ENCODE measurements at regions of chr16 and their contacts with region 1.

Region 1: DNA sequence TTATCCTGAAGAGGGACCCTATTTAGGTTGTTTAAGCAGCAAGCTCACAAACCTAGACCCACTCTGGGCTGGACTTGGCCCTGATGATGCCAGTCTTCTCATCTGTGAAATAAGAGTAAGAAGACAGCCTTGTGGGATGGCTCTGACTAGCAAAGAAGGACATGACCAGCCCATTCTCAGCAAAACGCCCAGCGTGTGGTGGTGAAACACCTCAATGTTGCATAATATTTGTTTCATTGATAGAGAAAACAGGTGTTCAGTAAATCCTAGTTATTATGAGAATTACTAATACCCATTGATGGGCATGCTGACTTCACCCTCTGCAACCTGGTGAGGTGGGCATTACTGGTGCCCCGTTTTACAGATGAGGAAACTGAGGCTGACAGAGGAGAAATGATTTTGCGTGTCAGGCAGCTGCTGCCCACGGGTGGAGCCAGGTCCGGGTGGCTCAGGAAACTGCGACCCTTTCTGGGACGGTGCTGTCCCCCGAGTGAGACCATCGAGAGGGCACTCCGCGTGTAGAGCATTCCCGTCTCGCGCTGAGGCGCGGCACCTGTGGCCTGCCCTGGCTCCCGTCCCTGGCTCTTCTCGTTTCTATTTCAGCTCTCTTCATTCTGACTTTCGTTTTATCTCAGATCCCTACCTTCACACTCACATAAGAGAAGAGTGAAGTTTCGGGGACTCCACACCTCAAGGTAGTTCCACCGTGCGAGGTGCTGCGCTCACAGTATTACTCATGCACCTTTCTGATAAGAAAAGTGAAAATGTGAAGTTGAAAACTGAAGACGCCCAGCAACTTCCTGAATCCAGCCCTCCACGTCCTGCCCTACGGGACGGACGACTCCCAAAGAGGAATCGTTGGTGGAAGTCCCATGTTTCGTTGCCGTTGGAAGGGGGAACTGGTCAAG is 48.5 kb downstream of the IRF8 start:
- DNase-seq: peak; percentile 87
- ATAC-seq: peak; percentile 63
- H3K4me3 ChIP-seq: peak overlapping the region; percentile 41 to 68 (median 64)
- H3K4me3 Mint-ChIP-seq: peak overlapping the region; percentile 94
- H3K27ac ChIP-seq: peak overlapping the region; percentile 88 to 92
- H3K27ac Mint-ChIP-seq: peak overlapping the region; percentile 98
- H3K4me1 ChIP-seq: peaks cover 70 to 79% of the 10 kb centered on the region in 2 donors
- H3K4me1 Mint-ChIP-seq: peaks cover 84% of the 10 kb centered on the region
- H3K27me3 ChIP-seq: no peaks in the 10 kb centered on the region
- H3K27me3 Mint-ChIP-seq: no peaks in the 10 kb centered on the region
- CTCF ChIP-seq: no peak

Region 2: GRCh38 chr16:85908444-85908843 is 39.0 kb before region 1 on chr16:
- CTCF ChIA-PET with region 1: interaction called, 4 read pairs
- POLR2A ChIA-PET with region 1: interaction called, 11 read pairs
- intact Hi-C with region 1: no loop called
- DNase-seq: peak; percentile 85
- ATAC-seq: peak; percentile 62
- H3K4me3 ChIP-seq: peak overlapping the region in 4 of 5 experiments; percentile 1 to 50 (median 13)
- H3K4me3 Mint-ChIP-seq: peak overlapping the region; percentile 75
- H3K27ac ChIP-seq: peak overlapping the region; percentile 80 to 82
- H3K27ac Mint-ChIP-seq: peak overlapping the region; percentile 92
- H3K4me1 ChIP-seq: peaks cover 97 to 100% of the 10 kb centered on the region in 2 donors
- H3K4me1 Mint-ChIP-seq: peaks cover 95% of the 10 kb centered on the region
- H3K27me3 ChIP-seq: no peaks in the 10 kb centered on the region
- H3K27me3 Mint-ChIP-seq: no peaks in the 10 kb centered on the region
- CTCF ChIP-seq: no peak

Region 3: DNA sequence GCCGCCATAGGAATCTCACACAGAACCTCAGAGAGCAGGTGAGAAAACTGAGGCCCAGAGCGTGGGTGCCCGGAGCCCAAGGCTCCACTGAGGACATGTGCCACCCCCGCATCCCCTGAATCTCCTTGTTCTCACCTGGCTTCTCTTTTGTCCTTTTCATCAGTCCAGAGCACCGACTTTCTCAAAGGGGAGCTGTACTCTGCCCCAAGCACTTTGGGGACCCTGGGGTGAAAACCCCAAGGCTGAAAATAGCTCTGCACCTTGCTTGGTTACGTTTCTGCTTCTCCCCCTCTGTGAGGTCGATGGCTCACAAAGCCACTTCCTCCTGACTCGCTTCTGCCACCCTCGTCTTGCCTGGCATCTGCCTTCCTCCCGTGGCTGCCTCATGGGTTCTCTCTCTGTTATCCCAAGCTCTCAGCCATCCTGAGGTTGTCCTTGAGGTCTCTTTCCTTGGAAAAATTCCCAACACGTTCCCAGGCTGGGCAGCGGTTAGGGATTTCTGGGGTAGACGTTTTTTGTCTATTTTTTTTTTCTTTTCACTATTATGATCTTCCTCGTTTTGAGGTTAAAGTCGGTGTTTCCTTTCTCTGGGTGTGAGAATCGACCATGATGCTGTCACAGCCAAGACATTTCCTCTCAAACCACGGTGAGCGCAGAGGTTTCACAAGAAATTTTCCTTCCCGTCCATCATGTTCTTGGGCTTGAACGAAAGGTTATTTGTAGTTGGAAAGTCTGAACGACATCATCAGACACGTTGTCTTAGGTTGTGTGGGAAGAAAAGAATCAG is 11.3 kb before region 1 on chr16:
- CTCF ChIA-PET with region 1: interaction called, 8 read pairs
- POLR2A ChIA-PET with region 1: interaction called, 32 read pairs
- intact Hi-C with region 1: loop called (anchors 1 kb)
- DNase-seq: peak; percentile 92
- ATAC-seq: peak; percentile 80
- H3K4me3 ChIP-seq: peak overlapping the region in 4 of 5 experiments; percentile 47 to 63 (median 55)
- H3K4me3 Mint-ChIP-seq: peak overlapping the region; percentile 81
- H3K27ac ChIP-seq: peak overlapping the region; percentile 96 to 98
- H3K27ac Mint-ChIP-seq: peak overlapping the region; percentile 94
- H3K4me1 ChIP-seq: peaks cover 76 to 85% of the 10 kb centered on the region in 2 donors
- H3K4me1 Mint-ChIP-seq: peaks cover 84% of the 10 kb centered on the region
- H3K27me3 ChIP-seq: no peaks in the 10 kb centered on the region
- H3K27me3 Mint-ChIP-seq: no peaks in the 10 kb centered on the region
- CTCF ChIP-seq: no peak

Region 4: GRCh38 chr16:85963753-85964285 is 16.3 kb after region 1 on chr16:
- CTCF ChIA-PET with region 1: interaction called, 3 read pairs
- POLR2A ChIA-PET with region 1: interaction called, 3 read pairs
- intact Hi-C with region 1: loop called (anchors 1 kb)
- DNase-seq: no peak
- ATAC-seq: no peak
- H3K4me3 ChIP-seq: no peak overlapping the region
- H3K4me3 Mint-ChIP-seq: no peak overlapping the region
- H3K27ac ChIP-seq: no peak overlapping the region
- H3K27ac Mint-ChIP-seq: no peak overlapping the region
- H3K4me1 ChIP-seq: peaks cover 17 to 34% of the 10 kb centered on the region in 2 donors
- H3K4me1 Mint-ChIP-seq: peaks cover 53% of the 10 kb centered on the region
- H3K27me3 ChIP-seq: no peaks in the 10 kb centered on the region
- H3K27me3 Mint-ChIP-seq: no peaks in the 10 kb centered on the region
- CTCF ChIP-seq: no peak

Measured in B cell (primary cell).